Naive thymus-derived CD4-positive, alpha-beta T cell (primary cell): ENCODE measurements at regions of chr12 and their contacts with region 1.

Region 1: DNA sequence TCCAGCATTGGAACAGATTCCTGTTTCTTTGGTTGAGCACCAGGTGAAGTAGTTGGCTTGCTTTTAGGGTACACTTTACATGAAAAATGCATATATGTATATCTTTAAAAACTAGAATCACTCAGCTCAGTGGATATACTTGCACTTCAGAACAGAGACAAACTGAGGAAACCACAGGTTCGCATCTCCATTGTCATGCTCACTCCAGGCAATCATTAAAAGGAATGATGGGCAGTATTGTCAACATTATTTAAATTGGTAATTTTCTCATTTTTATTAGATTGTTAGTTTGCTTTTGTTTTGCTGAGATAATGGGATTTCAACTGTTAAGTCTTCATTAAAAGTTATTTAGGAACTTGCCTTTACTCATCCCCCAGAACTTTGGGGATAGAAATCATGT is 71.0 kb upstream of the NELL2 start:
- DNase-seq: no peak
- ATAC-seq: no peak
- H3K4me3 ChIP-seq: no peak overlapping the region
- H3K4me3 Mint-ChIP-seq: no peak overlapping the region
- H3K27ac ChIP-seq: no peak overlapping the region
- H3K27ac Mint-ChIP-seq: no peak overlapping the region
- H3K4me1 ChIP-seq: no peaks in the 10 kb centered on the region
- H3K4me1 Mint-ChIP-seq: peaks cover 0 to 4% (median 3%) of the 10 kb centered on the region in 7 donors
- H3K27me3 ChIP-seq: no peaks in the 10 kb centered on the region
- H3K27me3 Mint-ChIP-seq: peaks cover 5 to 13% (median 8%) of the 10 kb centered on the region in 5 donors

Region 2: GRCh38 chr12:43957732-43958372 is 989.3 kb before region 1 on chr12:
- CTCF ChIA-PET with region 1: no interaction called
- POLR2A ChIA-PET with region 1: no interaction called
- intact Hi-C with region 1: loop called in 1 of 2 experiments (anchors 5 kb)
- DNase-seq: peak in 5 of 9 donors; percentile 5 to 22 (median 13)
- ATAC-seq: peak; percentile 68
- H3K4me3 ChIP-seq: no peak overlapping the region
- H3K4me3 Mint-ChIP-seq: no peak overlapping the region
- H3K27ac ChIP-seq: no peak overlapping the region
- H3K27ac Mint-ChIP-seq: no peak overlapping the region
- H3K4me1 ChIP-seq: no peaks in the 10 kb centered on the region
- H3K4me1 Mint-ChIP-seq: peaks cover 0 to 13% (median 5%) of the 10 kb centered on the region in 7 donors
- H3K27me3 ChIP-seq: no peaks in the 10 kb centered on the region
- H3K27me3 Mint-ChIP-seq: peaks cover 0 to 8% (median 0%) of the 10 kb centered on the region in 5 donors

Region 3: DNA sequence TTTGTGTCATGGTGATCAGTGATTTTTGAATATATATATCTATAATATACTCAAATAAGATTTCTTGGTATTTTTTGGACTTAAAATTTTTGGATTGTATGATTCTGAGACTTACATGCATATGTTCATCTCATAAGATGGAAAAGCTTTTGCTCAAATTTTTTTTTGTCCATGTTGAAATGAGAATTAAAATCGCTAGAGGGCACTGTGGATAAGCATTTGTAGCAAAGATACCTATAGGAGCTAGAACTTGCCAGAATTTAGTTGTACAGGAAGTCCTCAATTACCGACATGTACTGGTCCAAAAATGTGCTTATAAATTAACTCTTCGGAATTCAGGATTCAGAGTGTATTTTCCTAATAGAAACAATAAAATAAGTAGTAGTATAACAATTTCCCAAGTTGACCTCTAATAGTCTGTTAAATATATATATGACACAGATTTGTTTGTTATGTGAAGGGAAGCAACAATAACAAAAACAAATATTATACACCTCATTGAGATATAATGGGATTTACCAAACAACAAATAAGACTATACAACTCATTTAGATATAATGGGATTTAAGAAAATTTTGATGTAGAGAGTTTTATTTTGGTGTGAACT is 931.7 kb before region 1 on chr12:
- CTCF ChIA-PET with region 1: interaction called, 14 read pairs
- POLR2A ChIA-PET with region 1: no interaction called
- intact Hi-C with region 1: loop called (anchors 2 to 5 kb)
- DNase-seq: peak in 7 of 9 donors; percentile 14 to 56 (median 40)
- ATAC-seq: peak; percentile 53
- H3K4me3 ChIP-seq: no peak overlapping the region
- H3K4me3 Mint-ChIP-seq: no peak overlapping the region
- H3K27ac ChIP-seq: no peak overlapping the region
- H3K27ac Mint-ChIP-seq: no peak overlapping the region
- H3K4me1 ChIP-seq: no peaks in the 10 kb centered on the region
- H3K4me1 Mint-ChIP-seq: peaks cover 0 to 3% (median 0%) of the 10 kb centered on the region in 7 donors
- H3K27me3 ChIP-seq: no peaks in the 10 kb centered on the region
- H3K27me3 Mint-ChIP-seq: peaks cover 0 to 3% (median 0%) of the 10 kb centered on the region in 5 donors